IMR-90 (cell line): ENCODE measurements at regions of chr9 and their contacts with region 1.

Region 1: GRCh38 chr9:71768388-71769174 is at the start of gene CEMIP2:
- DNase-seq: peak; percentile 86
- ATAC-seq: peak; percentile 86
- H3K4me3 ChIP-seq: peak within 1 kb of the TSS; percentile 98
- H3K27ac ChIP-seq: peak within 1 kb of the TSS; percentile 95
- H3K4me1 ChIP-seq: peaks cover 6% of the 10 kb centered on the region; the same call in 1 of the 2 replicates
- H3K27me3 ChIP-seq: 0 out of 2 replicates have a peak, but pooled peaks cover 1% of the 10 kb centered on the region
- CTCF ChIP-seq: peak; percentile 63
- POLR2A ChIP-seq: peak; percentile 98
- RAD21 ChIP-seq: peak; percentile 74
- total RNA-seq, gene CEMIP2: 58.6 and 65.2 TPM in 2 replicates

Region 2: DNA sequence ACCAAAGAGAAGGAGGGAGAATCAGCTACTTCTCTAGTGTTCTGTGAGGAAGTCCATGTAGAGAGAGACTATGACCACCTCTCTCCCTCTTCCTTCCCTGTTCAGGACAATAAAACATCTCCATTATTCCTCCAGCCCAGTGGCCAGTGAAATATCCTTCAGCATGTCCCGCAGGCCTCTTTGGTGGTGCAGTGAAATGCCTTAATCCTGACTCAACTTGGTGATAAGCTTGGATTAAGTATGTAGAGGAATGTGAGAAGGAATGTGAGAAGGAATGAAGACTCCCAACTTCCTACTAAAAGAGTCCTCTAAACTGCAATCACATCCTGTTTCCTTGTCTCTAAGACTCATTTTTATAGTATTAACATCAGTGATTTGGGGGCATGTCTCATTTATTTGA is 814.5 kb before region 1 on chr9:
- CTCF ChIA-PET with region 1: no interaction called
- POLR2A ChIA-PET with region 1: no interaction called
- dilution Hi-C with region 1: no loop called
- in situ Hi-C with region 1: no loop called
- intact Hi-C with region 1: loop called (anchors 10 kb)
- DNase-seq: peak; percentile 90
- ATAC-seq: peak; percentile 93
- H3K4me3 ChIP-seq: no peak overlapping the region
- H3K27ac ChIP-seq: peak overlapping the region; percentile 94
- H3K4me1 ChIP-seq: peaks cover 12% of the 10 kb centered on the region
- H3K27me3 ChIP-seq: no peaks in the 10 kb centered on the region
- CTCF ChIP-seq: no peak
- POLR2A ChIP-seq: no peak
- RAD21 ChIP-seq: no peak

Region 3: DNA sequence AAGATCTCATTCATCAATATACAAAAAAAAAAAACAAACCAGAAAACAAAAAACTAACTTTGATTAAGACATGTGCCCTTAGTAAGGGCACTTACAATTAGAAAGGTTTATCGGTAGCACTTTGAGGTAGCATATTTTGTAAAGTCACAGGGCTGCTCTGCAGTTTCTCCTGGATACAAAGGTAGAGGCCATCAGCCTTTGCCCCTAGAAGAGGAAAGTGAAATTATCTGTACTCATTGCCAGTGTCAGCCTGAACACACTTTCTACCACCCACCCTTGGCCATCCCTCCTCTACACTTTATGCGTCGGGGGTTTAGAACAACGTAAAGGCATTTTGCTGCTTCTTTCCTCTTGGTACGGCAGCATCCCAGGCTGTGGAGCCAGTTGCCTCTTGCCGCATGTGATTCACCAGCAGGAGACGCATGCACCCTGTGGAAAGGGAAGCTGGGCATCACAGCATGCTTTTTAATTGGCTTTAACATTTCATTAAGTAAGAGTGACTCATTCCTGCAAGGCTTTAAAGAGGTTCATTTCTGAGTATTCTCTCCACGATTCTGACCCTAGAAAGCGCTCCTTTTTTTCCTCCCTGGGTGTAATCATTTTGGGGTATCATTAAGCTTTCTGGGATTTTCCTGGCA is 84.9 kb before region 1 on chr9:
- CTCF ChIA-PET with region 1: interaction called, 3 read pairs
- POLR2A ChIA-PET with region 1: interaction called, 6 read pairs
- dilution Hi-C with region 1: no loop called
- in situ Hi-C with region 1: no loop called
- intact Hi-C with region 1: loop called (anchors 1 kb)
- DNase-seq: peak; percentile 61
- ATAC-seq: peak; percentile 53
- H3K4me3 ChIP-seq: no peak overlapping the region
- H3K27ac ChIP-seq: no peak overlapping the region
- H3K4me1 ChIP-seq: peaks cover 19% of the 10 kb centered on the region
- H3K27me3 ChIP-seq: no peaks in the 10 kb centered on the region
- CTCF ChIP-seq: peak; percentile 52
- POLR2A ChIP-seq: no peak
- RAD21 ChIP-seq: peak; percentile 54